ENCODE measurements at regions of chr21 and their contacts with region 1.

Region 1: GRCh38 chr21:33360881-33361602 is 36.3 kb downstream of the IFNAR1 start:
- DNase-seq: peak; percentile 85
- H3K4me3 ChIP-seq: peak overlapping the region; percentile 38
- H3K27ac ChIP-seq: peak overlapping the region; percentile 73
- H3K4me1 ChIP-seq: peaks cover 38% of the 10 kb centered on the region
- CTCF ChIP-seq: peak; percentile 94

Region 2: DNA sequence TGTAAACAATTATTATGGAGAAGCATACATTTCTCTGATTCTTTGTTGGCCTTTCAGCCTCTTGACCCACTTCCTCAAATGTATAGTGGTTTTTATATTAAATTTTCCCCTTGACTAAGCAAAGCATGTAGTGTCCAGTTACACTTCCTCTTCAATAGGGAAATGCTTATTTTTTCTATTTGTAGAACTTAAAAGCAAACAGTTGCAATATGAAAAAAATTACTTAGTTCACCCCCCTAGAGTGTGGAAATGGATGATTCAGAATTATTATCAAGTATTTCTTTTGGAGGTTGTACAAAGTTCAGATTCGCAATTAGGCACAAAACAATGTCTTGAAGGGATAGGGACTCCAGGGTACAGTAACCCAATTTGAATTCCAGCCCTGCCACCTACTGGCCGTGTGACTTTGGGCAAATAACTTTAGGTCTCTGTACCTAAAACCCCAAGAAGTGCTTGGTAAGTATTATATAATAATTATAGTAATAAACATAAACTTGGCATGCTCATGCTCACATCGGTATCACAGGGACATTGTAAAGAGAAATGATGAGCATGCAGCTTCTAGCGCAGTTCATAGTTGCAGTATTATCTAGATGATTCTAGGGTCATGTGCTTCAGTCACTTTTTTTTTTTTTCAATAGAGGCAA is 13.5 kb after region 1 on chr21:
- CTCF ChIA-PET with region 1: interaction called, 4 read pairs
- POLR2A ChIA-PET with region 1: interaction called, 12 read pairs
- intact Hi-C with region 1: loop called (anchors 2 kb)
- DNase-seq: peak; percentile 87
- H3K4me3 ChIP-seq: peak overlapping the region; percentile 50
- H3K27ac ChIP-seq: peak overlapping the region; percentile 96
- H3K4me1 ChIP-seq: peaks cover 76% of the 10 kb centered on the region
- CTCF ChIP-seq: peak; percentile 95

Region 3: GRCh38 chr21:33403779-33404585 is 42.9 kb after region 1 on chr21:
- CTCF ChIA-PET with region 1: no interaction called
- POLR2A ChIA-PET with region 1: interaction called, 4 read pairs
- intact Hi-C with region 1: loop called (anchors 5 kb)
- DNase-seq: peak; percentile 72
- H3K4me3 ChIP-seq: peak overlapping the region; percentile 84
- H3K27ac ChIP-seq: peak overlapping the region; percentile 80
- H3K4me1 ChIP-seq: peaks cover 54% of the 10 kb centered on the region
- CTCF ChIP-seq: no peak

Measured in OCI-LY7 (cell line).